HCT116 (cell line): ENCODE measurements at regions of chr3 and their contacts with region 1.

Region 1: GRCh38 chr3:128680602-128681368 is 30.2 kb upstream of the RPN1 start:
- DNase-seq: peak; percentile 97
- ATAC-seq: peak; percentile 97
- H3K4me3 ChIP-seq: peak overlapping the region; percentile 60 to 73
- H3K27ac ChIP-seq: peak overlapping the region; percentile 90
- H3K4me1 ChIP-seq: peaks cover 13 to 29% of the 10 kb centered on the region in 2 experiments; a peak in 3 of 4 replicates
- H3K27me3 ChIP-seq: no peaks in the 10 kb centered on the region
- CTCF ChIP-seq: peak; percentile 89 to 95 (median 92)
- POLR2A ChIP-seq: peak; percentile 81
- RAD21 ChIP-seq: peak; percentile 95

Region 2: GRCh38 chr3:128650096-128651050 is 30.4 kb before region 1 on chr3 and contains the start of gene RPN1:
- CTCF ChIA-PET with region 1: interaction called, 5 read pairs
- POLR2A ChIA-PET with region 1: interaction called, 7 read pairs
- RAD21 ChIA-PET with region 1: interaction called in 1 of 2 experiments, 3 read pairs
- intact Hi-C with region 1: loop called (anchors 2 kb)
- DNase-seq: peak; percentile 86
- ATAC-seq: peak; percentile 96
- H3K4me3 ChIP-seq: peak within 1 kb of the TSS; percentile 91 to 99
- H3K27ac ChIP-seq: peak within 1 kb of the TSS; percentile 81
- H3K4me1 ChIP-seq: peaks cover 11 to 22% of the 10 kb centered on the region in 2 experiments; a peak in 3 of 4 replicates
- H3K27me3 ChIP-seq: no peaks in the 10 kb centered on the region
- CTCF ChIP-seq: no peak
- POLR2A ChIP-seq: peak; percentile 70
- RAD21 ChIP-seq: no peak
- total RNA-seq, gene RPN1: 218 TPM

Region 3: GRCh38 chr3:128725932-128726690 is 45.3 kb after region 1 on chr3 and contains the start of gene RAB7A:
- CTCF ChIA-PET with region 1: interaction called, 8 read pairs
- POLR2A ChIA-PET with region 1: interaction called, 5 read pairs
- RAD21 ChIA-PET with region 1: no interaction called
- intact Hi-C with region 1: loop called (anchors 5 kb)
- DNase-seq: peak; percentile 95
- ATAC-seq: peak; percentile 95
- H3K4me3 ChIP-seq: peak within 1 kb of the TSS; percentile 86 to 91
- H3K27ac ChIP-seq: peak within 1 kb of the TSS; percentile 78
- H3K4me1 ChIP-seq: peaks cover 10 to 25% of the 10 kb centered on the region in 2 experiments
- H3K27me3 ChIP-seq: no peaks in the 10 kb centered on the region
- CTCF ChIP-seq: no peak
- POLR2A ChIP-seq: peak; percentile 44
- RAD21 ChIP-seq: no peak
- total RNA-seq, gene RAB7A: 233 TPM

Region 4: GRCh38 chr3:128787256-128788240 is 106.8 kb after region 1 on chr3:
- CTCF ChIA-PET with region 1: interaction called, 11 read pairs
- POLR2A ChIA-PET with region 1: interaction called, 5 read pairs
- RAD21 ChIA-PET with region 1: no interaction called
- intact Hi-C with region 1: loop called (anchors 2 kb)
- DNase-seq: peak; percentile 51
- ATAC-seq: peak; percentile 87
- H3K4me3 ChIP-seq: peak overlapping the region; percentile 19 to 37
- H3K27ac ChIP-seq: peak overlapping the region; percentile 35; the same call in 1 of the 2 replicates
- H3K4me1 ChIP-seq: peaks cover 34 to 66% of the 10 kb centered on the region in 2 experiments
- H3K27me3 ChIP-seq: no peaks in the 10 kb centered on the region
- CTCF ChIP-seq: peak in 2 of 3 experiments; percentile 56 to 61; a peak in 4 of 6 replicates
- POLR2A ChIP-seq: no peak
- RAD21 ChIP-seq: no peak; the same call in 1 of the 2 replicates

Region 5: GRCh38 chr3:128794770-128795649 is 114.2 kb after region 1 on chr3:
- CTCF ChIA-PET with region 1: interaction called, 30 read pairs
- POLR2A ChIA-PET with region 1: interaction called, 6 read pairs
- RAD21 ChIA-PET with region 1: interaction called, 3 to 5 read pairs
- intact Hi-C with region 1: loop called (anchors 1 kb)
- DNase-seq: peak; percentile 46
- ATAC-seq: peak; percentile 96
- H3K4me3 ChIP-seq: no peak overlapping the region
- H3K27ac ChIP-seq: no peak overlapping the region; the same call in 1 of the 2 replicates
- H3K4me1 ChIP-seq: peaks cover 12 to 46% of the 10 kb centered on the region in 2 experiments; a peak in 3 of 4 replicates
- H3K27me3 ChIP-seq: no peaks in the 10 kb centered on the region
- CTCF ChIP-seq: peak; percentile 80 to 82 (median 82)
- POLR2A ChIP-seq: no peak
- RAD21 ChIP-seq: peak; percentile 82

Region 6: DNA sequence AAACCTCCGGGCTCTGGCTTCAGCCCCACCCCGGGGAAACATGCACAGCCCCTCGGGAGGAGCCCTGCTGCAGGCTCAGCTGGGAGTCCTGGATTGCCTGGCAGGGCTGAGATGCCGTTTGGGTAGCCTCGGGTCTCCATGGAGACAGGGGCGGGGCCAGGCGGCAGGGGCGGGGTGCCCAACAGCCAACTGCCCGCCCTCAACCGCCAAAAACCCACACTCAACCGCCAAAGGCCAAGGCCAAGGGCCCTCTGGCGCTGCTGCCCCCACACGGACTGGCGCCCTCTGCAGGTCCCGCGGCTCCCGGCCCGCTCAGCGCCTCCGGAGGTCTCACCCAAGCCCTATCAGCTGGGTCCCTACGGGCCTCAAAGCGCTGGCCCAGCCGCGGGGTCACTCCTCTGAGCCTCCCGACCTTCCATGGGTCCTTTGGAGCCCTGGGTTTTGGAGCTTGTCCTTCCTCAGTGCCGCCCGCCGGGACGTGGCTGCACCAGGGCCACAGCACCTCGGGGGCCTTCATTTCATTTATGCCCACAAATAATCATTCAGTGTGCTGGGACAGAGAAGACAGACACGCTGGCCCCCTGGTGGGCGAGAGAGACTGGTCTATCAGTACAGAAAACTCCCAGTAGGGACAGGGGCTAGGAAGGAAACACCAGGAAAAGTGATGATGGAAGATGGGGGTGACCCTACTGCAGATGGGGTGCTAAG is 165.1 kb after region 1 on chr3:
- CTCF ChIA-PET with region 1: interaction called, 12 read pairs
- POLR2A ChIA-PET with region 1: no interaction called
- RAD21 ChIA-PET with region 1: no interaction called
- intact Hi-C with region 1: no loop called
- DNase-seq: peak; percentile 37
- ATAC-seq: peak; percentile 91
- H3K4me3 ChIP-seq: peak overlapping the region; percentile 11 to 22; a peak in 1 of 4 replicates
- H3K27ac ChIP-seq: peak overlapping the region; percentile 23; the same call in 1 of the 2 replicates
- H3K4me1 ChIP-seq: peaks cover 5 to 15% of the 10 kb centered on the region in 2 experiments; a peak in 3 of 4 replicates
- H3K27me3 ChIP-seq: no peaks in the 10 kb centered on the region
- CTCF ChIP-seq: peak; percentile 60 to 80 (median 62)
- POLR2A ChIP-seq: no peak
- RAD21 ChIP-seq: peak; percentile 34

Region 7: GRCh38 chr3:129095285-129095684 is 414.5 kb after region 1 on chr3:
- CTCF ChIA-PET with region 1: no interaction called
- POLR2A ChIA-PET with region 1: no interaction called
- RAD21 ChIA-PET with region 1: no interaction called
- intact Hi-C with region 1: no loop called
- DNase-seq: no peak
- ATAC-seq: no peak
- H3K4me3 ChIP-seq: no peak overlapping the region
- H3K27ac ChIP-seq: no peak overlapping the region
- H3K4me1 ChIP-seq: no peaks in the 10 kb centered on the region
- H3K27me3 ChIP-seq: no peaks in the 10 kb centered on the region
- CTCF ChIP-seq: no peak
- POLR2A ChIP-seq: no peak
- RAD21 ChIP-seq: no peak